ENCODE measurements at regions of chr16 and their contacts with region 1.

Region 1: GRCh38 chr16:67935402-67936123 is 1.1 kb downstream of the PSMB10 start:
- DNase-seq: peak; percentile 90 to 100 (median 98)

Region 2: DNA sequence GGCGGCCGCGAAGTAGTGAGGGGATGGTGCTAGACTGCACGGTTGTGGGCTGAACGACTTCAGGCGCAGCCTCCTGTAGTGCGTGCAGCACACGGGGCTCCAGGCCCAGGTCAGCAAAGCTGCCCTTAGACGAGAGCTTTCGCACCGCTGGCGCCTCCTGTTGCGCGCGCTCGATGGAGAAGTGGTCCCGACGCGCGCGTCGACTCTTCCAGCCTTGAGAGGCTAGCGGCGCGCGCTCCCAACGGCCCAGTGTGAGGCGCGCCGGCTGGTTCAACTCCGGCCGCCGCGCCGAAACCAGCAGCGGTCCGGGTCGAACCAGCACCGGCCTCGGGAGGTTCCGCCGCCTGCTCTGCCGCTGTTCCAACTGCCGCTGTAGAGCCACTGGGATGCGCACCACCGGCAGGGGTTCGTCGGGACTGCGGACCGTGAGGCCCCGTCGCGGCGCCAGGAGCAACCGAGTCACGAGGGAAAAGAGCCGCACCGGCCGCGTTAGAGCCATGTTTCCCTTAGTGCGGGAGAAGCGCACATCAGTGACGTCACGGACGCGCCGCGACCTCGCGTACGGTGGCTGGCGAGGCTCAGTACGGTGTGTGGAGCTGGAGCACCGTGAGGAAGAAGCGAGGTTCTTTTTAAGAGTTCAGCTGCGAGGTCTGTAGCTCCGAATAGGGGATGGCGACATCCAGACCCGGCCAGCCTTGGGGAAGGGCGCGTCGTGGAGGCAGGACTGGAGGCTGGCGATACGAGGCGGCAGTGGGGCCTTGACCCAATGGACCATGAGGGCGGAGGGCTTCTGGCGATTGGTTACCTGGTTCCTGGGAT is 87.3 kb after region 1 on chr16 and contains the starts of genes DDX28 and DUS2:
- intact Hi-C with region 1: loop called (anchors 10 kb)
- DNase-seq: peak; percentile 84 to 98 (median 94)

Region 3: GRCh38 chr16:68040507-68041288 is 105.1 kb after region 1 on chr16:
- intact Hi-C with region 1: loop called (anchors 5 kb)
- DNase-seq: peak; percentile 63 to 97 (median 84)

Region 4: DNA sequence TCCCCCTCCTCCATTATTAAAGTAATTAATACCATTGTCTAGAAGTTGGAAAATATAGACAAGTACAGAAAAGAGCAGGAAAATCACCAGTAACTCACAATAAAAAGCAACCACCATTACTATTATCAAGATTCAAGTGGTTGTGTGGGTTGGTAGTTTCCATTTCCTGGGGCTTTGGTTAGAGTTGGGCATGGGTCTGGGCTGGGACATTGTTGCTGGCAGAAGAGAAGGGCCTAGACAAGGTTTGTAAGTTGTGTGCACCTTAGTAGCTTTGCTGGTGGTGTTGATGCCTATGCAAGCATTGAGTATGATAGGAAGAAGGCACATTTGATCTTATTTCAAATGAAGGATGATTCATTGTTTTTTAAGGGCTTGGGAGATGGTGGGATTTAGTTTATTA is 124.2 kb after region 1 on chr16:
- intact Hi-C with region 1: no loop called
- DNase-seq: no peak

Measured in posterior cingulate gyrus (tissue), 11 donors.